CD8-positive, alpha-beta T cell (primary cell): ENCODE measurements at regions of chr11 and their contacts with region 1.

Region 1: DNA sequence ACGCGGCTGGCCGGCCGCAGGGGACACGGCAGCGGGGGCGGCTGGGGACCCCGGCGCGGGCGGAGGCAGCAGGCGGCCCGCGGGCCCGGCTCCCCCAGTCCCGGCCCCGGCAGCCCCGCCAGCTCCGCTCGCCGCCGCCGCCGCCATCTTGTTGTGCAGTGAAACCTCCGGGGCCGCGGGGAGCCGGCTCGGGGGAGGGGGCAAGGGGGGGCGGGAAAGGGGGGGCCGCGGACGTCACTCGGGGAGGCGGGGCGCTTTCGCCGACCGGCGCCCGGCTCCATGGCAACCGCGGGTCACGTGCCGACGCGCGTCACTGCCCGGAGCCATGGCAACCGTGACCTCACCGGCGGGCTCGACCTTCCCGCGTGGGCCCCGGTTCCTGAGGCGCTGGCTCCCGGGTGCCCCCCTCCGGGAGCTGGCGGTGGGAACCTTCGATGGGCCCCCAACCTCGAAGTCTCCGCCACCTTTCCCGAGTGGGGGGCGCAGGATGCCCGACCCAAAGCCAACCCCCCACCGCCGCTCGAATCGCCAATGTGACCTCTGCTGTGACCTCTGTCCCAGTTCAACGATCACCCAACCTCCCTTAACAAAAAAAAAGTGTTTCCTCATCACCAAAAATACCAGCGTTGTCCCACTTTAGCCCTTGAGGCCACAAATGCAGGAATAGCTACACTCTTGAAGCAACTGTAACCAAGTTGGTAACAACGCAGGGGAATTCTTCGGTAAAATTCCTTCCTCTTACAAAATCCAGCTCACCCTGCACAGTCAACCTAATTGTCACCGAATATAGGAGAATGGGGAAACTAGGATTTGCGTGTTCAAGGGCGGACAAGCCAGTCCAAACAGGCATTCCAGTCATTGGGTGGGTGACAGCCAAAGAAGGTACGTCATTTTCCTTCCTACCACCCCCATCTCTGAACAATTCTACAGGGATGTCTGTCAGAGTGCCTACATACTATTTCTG is at the start of gene SIK3:
- DNase-seq: peak; percentile 90 to 98 (median 93)
- ATAC-seq: peak; percentile 71
- H3K4me3 ChIP-seq: peak within 1 kb of the TSS; percentile 75 to 84
- H3K4me3 Mint-ChIP-seq: peak within 1 kb of the TSS; percentile 97
- H3K27ac ChIP-seq: peak within 1 kb of the TSS; percentile 88 to 100
- H3K27ac Mint-ChIP-seq: peak within 1 kb of the TSS; percentile 99
- H3K4me1 ChIP-seq: peaks cover 44% of the 10 kb centered on the region
- H3K4me1 Mint-ChIP-seq: peaks cover 47% of the 10 kb centered on the region
- H3K27me3 ChIP-seq: no peaks in the 10 kb centered on the region
- H3K27me3 Mint-ChIP-seq: no peaks in the 10 kb centered on the region
- CTCF ChIP-seq: peak; percentile 33
- total RNA-seq, gene SIK3: 96.6 to 107 TPM

Region 2: DNA sequence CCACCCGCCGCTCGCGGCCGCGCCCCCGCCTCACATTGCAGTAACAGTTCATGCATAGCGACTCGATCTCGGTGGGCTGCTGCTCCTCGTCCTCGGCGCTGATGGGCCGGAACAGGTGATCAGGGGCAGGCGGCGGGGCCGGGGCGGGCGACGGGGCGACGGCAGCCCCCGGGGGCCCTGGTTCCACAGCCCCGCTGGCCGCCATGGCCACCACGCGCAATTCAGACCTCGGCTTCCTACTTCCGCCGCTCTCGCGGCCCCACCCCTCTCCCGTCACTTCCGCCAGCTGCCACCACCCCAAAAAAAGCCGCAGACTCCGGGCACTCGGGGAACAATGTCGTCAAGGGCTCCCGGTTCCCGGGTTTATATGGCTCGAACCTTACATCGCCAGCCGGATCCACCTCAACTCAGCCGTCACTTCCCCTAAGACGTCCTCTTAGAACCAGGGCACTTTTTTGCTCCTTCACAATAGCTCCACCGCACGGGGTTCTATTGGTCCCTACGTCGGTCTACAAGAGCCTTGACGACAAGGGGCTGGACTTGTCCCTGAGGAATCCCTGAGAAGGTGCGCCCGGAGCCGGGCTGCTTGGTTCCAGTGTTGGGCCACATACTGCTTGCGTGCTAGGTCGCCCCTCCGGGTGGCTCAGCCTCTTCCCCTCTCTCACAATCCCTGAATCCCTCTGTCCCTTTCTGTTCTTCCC is 310.6 kb before region 1 on chr11 and contains the start of gene ZPR1:
- CTCF ChIA-PET with region 1: interaction called, 153 read pairs
- POLR2A ChIA-PET with region 1: interaction called, 3 read pairs
- intact Hi-C with region 1: loop called in 1 of 2 experiments (anchors 1 kb)
- DNase-seq: peak; percentile 69 to 91 (median 87)
- ATAC-seq: peak; percentile 80
- H3K4me3 ChIP-seq: peak within 1 kb of the TSS; percentile 60 to 94
- H3K4me3 Mint-ChIP-seq: peak within 1 kb of the TSS; percentile 95
- H3K27ac ChIP-seq: peak within 1 kb of the TSS; percentile 80 to 95
- H3K27ac Mint-ChIP-seq: peak within 1 kb of the TSS; percentile 91
- H3K4me1 ChIP-seq: peaks cover 29% of the 10 kb centered on the region
- H3K4me1 Mint-ChIP-seq: peaks cover 54% of the 10 kb centered on the region
- H3K27me3 ChIP-seq: no peaks in the 10 kb centered on the region
- H3K27me3 Mint-ChIP-seq: no peaks in the 10 kb centered on the region
- CTCF ChIP-seq: no peak
- total RNA-seq, gene ZPR1: 132 to 134 TPM

Region 3: DNA sequence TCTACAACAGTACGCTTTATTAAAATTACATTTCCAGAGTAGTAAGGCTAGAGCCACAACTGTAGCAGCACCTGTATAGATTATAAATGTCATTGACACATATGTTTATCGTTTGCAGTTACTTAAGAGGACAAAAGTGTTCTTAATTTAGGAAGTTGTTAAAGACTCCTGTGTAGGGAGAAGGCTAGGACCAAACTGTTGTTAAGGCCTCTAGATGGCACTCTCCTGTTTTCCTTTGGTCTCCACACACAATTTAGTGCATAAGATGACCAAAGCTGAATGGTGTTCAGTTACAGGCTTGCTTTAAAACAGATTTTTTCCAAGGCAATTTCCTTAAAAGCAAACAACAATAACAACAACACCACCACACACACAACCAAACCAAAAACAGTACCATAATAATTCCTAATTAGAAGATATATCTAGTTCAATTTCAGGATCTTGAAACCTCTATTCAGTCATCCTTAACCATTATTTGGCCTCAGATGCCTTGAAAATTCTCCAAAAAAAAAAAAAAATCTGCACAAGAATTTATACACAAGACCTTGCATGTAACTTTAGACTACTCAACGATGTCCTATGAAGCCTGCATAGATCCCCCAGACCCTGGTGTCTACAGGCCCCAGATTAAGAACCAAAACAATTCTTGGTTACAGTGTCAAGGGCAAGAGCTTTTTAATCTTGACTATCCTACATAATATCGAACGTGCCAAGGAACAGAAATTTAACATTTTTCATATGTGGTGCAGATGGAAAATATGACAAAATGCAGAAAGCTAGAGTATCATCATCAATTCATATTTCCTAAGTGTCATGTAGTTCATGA is 218.5 kb before region 1 on chr11:
- CTCF ChIA-PET with region 1: interaction called, 64 read pairs
- POLR2A ChIA-PET with region 1: interaction called, 3 read pairs
- intact Hi-C with region 1: loop called in 1 of 2 experiments (anchors 2 kb)
- DNase-seq: peak in 4 of 9 experiments; percentile 15 to 76 (median 44)
- ATAC-seq: peak; percentile 75
- H3K4me3 ChIP-seq: no peak overlapping the region
- H3K4me3 Mint-ChIP-seq: no peak overlapping the region
- H3K27ac ChIP-seq: no peak overlapping the region
- H3K27ac Mint-ChIP-seq: no peak overlapping the region
- H3K4me1 ChIP-seq: no peaks in the 10 kb centered on the region
- H3K4me1 Mint-ChIP-seq: peaks cover 5% of the 10 kb centered on the region
- H3K27me3 ChIP-seq: no peaks in the 10 kb centered on the region
- H3K27me3 Mint-ChIP-seq: no peaks in the 10 kb centered on the region
- CTCF ChIP-seq: peak; percentile 71

Region 4: DNA sequence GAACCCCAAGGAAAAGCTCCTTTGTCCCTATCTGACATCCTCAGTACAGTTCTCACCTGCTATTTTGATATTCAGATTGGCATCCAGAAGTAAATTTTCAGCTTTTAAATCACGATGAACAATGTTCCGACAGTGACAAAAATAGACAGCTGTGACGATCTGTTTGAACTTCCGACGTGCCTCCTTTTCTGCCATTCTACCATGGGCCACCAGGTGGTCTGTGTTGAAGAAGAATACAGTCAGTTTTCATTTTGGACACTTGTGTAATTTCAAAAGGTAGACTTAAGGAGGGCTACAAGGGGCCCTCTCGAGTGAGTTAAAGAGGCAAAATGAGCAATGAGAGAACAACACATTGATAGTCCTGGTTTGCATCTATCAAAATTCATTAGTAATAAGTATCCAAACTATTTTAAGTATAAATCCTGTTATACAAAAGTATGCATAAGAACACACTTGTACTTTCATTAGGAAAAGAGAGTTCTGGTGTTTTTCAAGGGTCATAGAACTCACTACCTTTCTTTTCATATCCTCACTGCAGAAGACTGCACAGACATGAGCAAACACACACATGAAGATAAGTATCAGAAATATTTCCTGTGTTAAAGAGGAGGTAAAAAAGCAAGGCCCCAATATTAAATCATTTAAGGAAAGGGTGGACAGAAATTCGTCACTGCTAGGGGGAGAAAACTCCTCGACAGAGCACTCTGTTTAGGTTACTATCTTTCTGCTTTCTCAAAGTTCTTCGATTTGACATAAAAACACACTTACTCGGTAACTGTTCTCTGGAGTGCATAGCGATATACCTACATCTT is 171.2 kb before region 1 on chr11:
- CTCF ChIA-PET with region 1: interaction called, 5 read pairs
- POLR2A ChIA-PET with region 1: interaction called, 9 read pairs
- intact Hi-C with region 1: loop called (anchors 1 kb)
- DNase-seq: peak; percentile 18 to 81 (median 56)
- ATAC-seq: peak; percentile 59
- H3K4me3 ChIP-seq: no peak overlapping the region
- H3K4me3 Mint-ChIP-seq: peak overlapping the region; percentile 65
- H3K27ac ChIP-seq: peak overlapping the region; percentile 37 to 96
- H3K27ac Mint-ChIP-seq: peak overlapping the region; percentile 86
- H3K4me1 ChIP-seq: peaks cover 75% of the 10 kb centered on the region
- H3K4me1 Mint-ChIP-seq: peaks cover 80% of the 10 kb centered on the region
- H3K27me3 ChIP-seq: no peaks in the 10 kb centered on the region
- H3K27me3 Mint-ChIP-seq: no peaks in the 10 kb centered on the region
- CTCF ChIP-seq: peak; percentile 71

Region 5: DNA sequence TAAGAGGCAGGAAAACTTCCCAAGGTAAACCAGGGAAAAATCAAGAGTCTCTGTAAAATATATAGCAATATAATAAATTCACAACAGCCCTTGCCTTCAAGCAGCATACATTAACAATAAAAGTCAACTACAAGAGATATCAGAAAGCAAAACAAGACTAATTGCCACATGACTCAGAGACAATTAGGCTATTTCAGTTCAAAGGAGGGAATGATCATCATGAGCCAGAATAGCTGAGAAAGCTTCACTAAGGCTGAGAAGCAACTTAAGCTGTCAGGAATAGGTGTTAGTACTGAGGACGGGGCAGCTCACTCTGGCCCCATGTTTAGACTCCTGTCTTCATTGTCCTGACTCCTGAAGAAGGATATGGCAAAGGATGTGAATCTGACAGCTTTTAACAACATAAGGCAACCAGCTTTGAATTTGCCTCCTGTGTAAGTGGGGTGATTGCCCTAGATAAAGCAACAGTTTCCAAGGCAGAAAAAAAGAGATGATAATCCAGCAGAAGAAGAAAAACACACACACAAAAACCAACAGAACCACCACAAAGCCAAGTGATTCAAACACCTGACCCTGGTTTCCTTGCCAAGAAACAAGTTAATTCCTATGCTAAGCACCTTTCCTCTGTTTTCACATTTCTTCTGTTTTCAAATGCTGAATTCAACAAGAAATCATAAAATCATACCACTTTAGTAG is 61.1 kb before region 1 on chr11:
- CTCF ChIA-PET with region 1: no interaction called
- POLR2A ChIA-PET with region 1: no interaction called
- intact Hi-C with region 1: loop called in 1 of 2 experiments (anchors 5 kb)
- DNase-seq: peak in 2 of 9 experiments; percentile 31 to 52
- ATAC-seq: peak; percentile 38
- H3K4me3 ChIP-seq: no peak overlapping the region
- H3K4me3 Mint-ChIP-seq: peak overlapping the region; percentile 46
- H3K27ac ChIP-seq: peak overlapping the region; percentile 11 to 53
- H3K27ac Mint-ChIP-seq: peak overlapping the region; percentile 72
- H3K4me1 ChIP-seq: peaks cover 23% of the 10 kb centered on the region
- H3K4me1 Mint-ChIP-seq: peaks cover 71% of the 10 kb centered on the region
- H3K27me3 ChIP-seq: no peaks in the 10 kb centered on the region
- H3K27me3 Mint-ChIP-seq: no peaks in the 10 kb centered on the region
- CTCF ChIP-seq: no peak

Region 6: DNA sequence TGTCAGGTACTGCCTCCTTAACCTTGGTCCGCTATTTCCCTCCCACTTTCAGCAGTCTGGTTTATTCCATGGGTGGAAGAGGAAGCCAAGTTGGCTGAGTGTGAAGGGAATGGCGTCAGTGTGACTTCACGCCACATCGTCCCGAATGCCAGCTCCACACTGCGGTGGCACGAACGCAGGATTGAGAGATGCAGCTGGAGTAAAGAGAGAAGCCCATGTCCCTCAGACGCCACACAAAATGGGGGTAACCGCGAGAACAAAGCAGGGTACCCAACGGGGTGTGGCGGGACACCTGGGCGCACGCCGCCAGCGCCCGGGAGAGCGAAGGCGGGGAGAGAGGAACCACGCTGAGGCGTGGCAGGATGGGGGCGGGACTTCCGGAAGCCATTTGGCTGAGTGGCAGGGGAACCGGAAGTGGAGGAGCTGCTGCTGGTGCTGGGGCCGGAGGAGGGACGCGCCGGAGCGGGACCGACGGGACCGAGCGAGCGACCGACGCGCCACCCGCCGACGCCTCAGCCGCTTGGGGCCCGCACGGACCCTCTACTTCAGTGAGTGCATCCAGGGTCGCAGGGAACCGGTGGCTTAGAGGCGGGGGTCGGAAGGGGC is 45.4 kb after region 1 on chr11 and contains the start of gene PAFAH1B2:
- CTCF ChIA-PET with region 1: no interaction called
- POLR2A ChIA-PET with region 1: interaction called, 5 read pairs
- intact Hi-C with region 1: loop called in 1 of 2 experiments (anchors 1 kb)
- DNase-seq: peak; percentile 87 to 97 (median 95)
- ATAC-seq: peak; percentile 82
- H3K4me3 ChIP-seq: peak within 1 kb of the TSS; percentile 74 to 78
- H3K4me3 Mint-ChIP-seq: peak within 1 kb of the TSS; percentile 95
- H3K27ac ChIP-seq: peak within 1 kb of the TSS; percentile 69 to 75
- H3K27ac Mint-ChIP-seq: peak within 1 kb of the TSS; percentile 95
- H3K4me1 ChIP-seq: peaks cover 16% of the 10 kb centered on the region
- H3K4me1 Mint-ChIP-seq: peaks cover 44% of the 10 kb centered on the region
- H3K27me3 ChIP-seq: peaks cover 0 to 3% of the 10 kb centered on the region in 2 experiments
- H3K27me3 Mint-ChIP-seq: peaks cover 5% of the 10 kb centered on the region
- CTCF ChIP-seq: no peak
- total RNA-seq, gene PAFAH1B2: 52.1 to 55.9 TPM

Region 7: GRCh38 chr11:117232092-117232878 is 133.7 kb after region 1 on chr11 and contains the start of gene RNF214:
- CTCF ChIA-PET with region 1: interaction called, 4 read pairs
- POLR2A ChIA-PET with region 1: interaction called, 4 read pairs
- intact Hi-C with region 1: loop called in 1 of 2 experiments (anchors 1 kb)
- DNase-seq: peak; percentile 51 to 89 (median 72)
- ATAC-seq: peak; percentile 75
- H3K4me3 ChIP-seq: peak within 1 kb of the TSS; percentile 70 to 91
- H3K4me3 Mint-ChIP-seq: peak within 1 kb of the TSS; percentile 96
- H3K27ac ChIP-seq: peak within 1 kb of the TSS; percentile 94 to 97
- H3K27ac Mint-ChIP-seq: peak within 1 kb of the TSS; percentile 98
- H3K4me1 ChIP-seq: peaks cover 30% of the 10 kb centered on the region
- H3K4me1 Mint-ChIP-seq: peaks cover 44% of the 10 kb centered on the region
- H3K27me3 ChIP-seq: no peaks in the 10 kb centered on the region
- H3K27me3 Mint-ChIP-seq: no peaks in the 10 kb centered on the region
- CTCF ChIP-seq: peak; percentile 64
- total RNA-seq, gene RNF214: 10.8 to 11.7 TPM

Region 8: DNA sequence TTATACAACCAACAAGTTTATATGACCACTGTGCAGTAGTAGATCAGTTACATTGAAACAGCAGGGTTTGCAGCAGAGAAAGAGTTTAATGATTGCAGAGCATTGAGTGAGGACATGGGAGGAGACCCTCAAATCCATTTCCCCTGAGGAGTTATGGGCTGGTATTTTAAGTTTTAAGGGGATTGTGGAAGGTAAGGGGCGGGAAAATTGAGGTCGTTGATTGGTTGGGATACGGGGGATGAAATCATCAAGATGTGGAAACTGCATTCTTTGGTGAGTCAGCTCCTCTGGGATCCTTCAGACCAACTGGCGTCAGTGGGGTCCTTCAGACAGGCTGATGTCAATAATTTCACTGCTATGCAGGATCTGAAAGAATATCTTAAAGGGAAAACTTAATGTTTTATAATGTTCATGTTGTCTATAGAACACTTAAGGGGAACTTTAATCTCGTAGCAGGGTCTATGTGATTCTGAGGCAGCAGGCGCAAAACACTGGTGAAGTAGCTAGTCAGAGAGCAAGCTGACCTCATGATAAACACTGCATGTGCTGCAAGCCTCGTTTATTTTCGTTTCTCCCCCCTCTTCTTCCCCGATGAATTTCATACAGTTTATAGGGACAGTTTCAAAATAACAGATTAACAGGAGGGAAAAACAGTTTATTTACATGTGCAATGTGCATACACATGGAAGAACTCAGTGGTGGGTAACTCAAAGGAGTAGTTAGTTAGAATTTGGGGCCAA is 175.2 kb after region 1 on chr11:
- CTCF ChIA-PET with region 1: no interaction called
- POLR2A ChIA-PET with region 1: no interaction called
- intact Hi-C with region 1: no loop called
- DNase-seq: no peak
- ATAC-seq: no peak
- H3K4me3 ChIP-seq: no peak overlapping the region
- H3K4me3 Mint-ChIP-seq: no peak overlapping the region
- H3K27ac ChIP-seq: no peak overlapping the region
- H3K27ac Mint-ChIP-seq: no peak overlapping the region
- H3K4me1 ChIP-seq: no peaks in the 10 kb centered on the region
- H3K4me1 Mint-ChIP-seq: peaks cover 12% of the 10 kb centered on the region
- H3K27me3 ChIP-seq: no peaks in the 10 kb centered on the region
- H3K27me3 Mint-ChIP-seq: no peaks in the 10 kb centered on the region
- CTCF ChIP-seq: no peak